ENCODE measurements at regions of chr3 and their contacts with region 1.

Region 1: DNA sequence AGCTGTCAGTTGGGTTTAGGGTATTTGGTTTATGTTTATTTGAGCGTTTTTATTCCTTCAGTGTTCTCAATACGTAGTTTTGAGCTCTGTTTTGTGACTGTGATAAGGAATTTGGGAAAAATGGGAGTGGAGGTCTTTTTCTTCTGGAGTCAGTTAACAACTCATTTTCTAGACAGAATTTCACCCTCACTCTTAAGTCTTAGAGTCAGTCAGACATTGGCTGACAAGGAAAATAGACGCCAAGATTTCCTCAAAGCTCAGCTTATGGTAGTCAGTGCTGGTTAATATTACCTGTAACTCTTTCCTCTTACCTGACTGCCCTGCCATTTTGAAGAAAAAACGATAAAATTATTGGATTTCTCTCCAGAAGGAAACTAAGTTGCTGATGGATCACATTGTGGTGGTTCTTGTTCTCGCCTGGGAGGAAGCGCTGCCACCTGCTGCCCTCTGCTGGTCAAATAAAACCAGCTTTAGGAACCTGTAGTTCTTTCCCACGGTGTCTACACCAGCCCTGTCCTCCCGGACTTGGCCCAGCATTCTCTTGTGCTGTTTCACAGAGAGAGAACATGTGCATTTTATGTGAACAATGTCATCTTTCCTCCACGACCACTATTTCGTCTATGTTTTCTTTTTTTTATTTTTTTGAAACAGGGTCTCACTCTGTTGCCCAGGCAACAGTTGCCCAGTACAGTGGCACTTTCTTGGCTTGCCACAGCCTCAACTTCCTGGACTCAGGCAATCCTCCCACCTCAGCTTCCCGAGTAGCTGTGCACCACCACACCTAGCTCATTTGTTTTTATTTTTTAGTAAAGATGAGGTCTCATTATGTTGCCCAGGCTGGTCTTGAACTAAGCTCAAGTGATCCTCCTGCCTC is 41.4 kb upstream of the UMPS start:
- DNase-seq: peak; percentile 92
- H3K4me3 Mint-ChIP-seq: no peak overlapping the region
- H3K27ac Mint-ChIP-seq: no peak overlapping the region
- H3K4me1 Mint-ChIP-seq: peaks cover 10% of the 10 kb centered on the region
- H3K27me3 Mint-ChIP-seq: peaks cover 33% of the 10 kb centered on the region

Region 2: DNA sequence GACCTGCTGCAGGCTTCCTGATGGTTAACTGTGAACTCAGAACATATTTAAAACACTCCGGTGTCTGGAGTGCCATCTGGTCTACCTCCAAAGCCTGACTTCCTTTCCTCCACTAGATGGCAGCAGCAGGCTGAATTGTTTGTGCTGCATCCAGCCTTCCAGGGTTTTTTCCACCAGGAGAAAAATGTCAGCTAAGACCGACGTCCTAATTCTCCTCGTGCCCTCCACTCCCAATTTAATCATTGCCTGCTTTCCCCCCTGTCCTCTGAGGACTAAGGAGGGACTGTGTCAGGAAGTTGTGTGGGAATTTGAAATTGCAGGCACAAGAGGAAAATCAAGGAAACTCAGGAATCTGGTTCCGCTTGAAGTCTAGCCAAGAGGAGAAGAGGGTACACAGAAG is 123.8 kb before region 1 on chr3:
- intact Hi-C with region 1: loop called (anchors 1 kb)
- DNase-seq: peak; percentile 87
- H3K4me3 Mint-ChIP-seq: no peak overlapping the region
- H3K27ac Mint-ChIP-seq: no peak overlapping the region
- H3K4me1 Mint-ChIP-seq: no peaks in the 10 kb centered on the region
- H3K27me3 Mint-ChIP-seq: peaks cover 41% of the 10 kb centered on the region

Region 3: DNA sequence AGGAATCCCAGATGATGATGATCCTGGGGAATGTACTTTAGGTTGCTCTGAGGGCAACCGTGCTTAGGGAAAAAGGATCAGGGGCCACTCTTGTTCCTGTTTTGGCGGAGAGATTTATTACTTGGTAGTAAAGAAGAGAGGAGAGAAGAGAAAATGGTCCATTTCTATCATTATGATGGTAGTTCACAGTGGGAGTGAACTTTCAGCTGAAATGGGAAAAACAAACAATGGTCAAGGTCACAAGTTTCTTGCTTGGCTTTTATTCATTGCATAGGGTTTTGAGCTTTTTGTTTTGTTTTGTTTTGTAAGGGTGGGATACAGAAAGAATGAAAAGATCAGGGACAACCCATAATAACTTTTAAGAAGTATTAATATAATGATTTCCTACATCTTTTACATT is 33.8 kb after region 1 on chr3:
- intact Hi-C with region 1: no loop called
- DNase-seq: no peak
- H3K4me3 Mint-ChIP-seq: no peak overlapping the region
- H3K27ac Mint-ChIP-seq: no peak overlapping the region
- H3K4me1 Mint-ChIP-seq: no peaks in the 10 kb centered on the region
- H3K27me3 Mint-ChIP-seq: peaks cover 51% of the 10 kb centered on the region